HEK293T (cell line): ENCODE measurements at regions of chr6 and their contacts with region 1.

Region 1: GRCh38 chr6:89829591-89830385 is at the start of gene CASP8AP2:
- DNase-seq: peak; percentile 94

Region 2: DNA sequence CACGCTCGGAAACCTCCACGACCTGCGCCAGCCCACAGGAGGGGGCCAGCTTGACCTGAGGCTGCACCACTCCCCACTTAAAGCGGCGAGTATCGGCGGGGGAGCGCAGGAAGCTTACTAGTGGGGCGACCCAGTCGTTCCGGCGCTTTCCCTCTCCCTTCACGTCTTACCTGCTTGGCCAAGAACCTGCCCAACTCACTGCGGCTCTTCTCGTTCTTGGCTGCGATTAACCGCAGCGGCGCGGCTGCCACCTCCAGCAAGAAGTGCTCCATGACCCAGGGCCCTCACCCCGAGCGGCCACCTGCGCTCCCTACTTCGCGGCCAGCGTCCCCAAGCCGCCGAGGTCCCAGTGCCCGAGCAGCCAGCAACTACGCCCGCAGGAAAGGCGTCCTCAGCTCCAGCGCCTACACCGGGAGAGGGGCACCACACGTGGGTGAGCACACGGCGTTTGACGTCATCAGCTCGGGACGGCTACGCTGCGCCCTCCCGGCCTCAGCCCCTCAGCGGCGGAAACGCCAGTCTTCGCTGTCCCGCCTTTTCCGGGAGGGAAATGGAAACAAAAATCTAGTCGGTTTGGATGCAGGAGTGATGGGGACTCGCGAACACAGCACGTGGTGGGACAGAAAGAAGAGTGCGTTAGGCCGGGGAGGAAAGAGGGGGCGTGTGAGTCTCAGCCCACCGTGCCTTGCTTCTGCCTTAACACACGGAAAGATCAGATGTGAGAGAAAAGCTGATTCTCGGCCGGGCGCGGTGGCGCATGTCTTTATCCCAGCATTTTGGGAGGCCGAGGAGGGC is 10.3 kb before region 1 on chr6 and contains the start of gene MDN1:
- CTCF ChIA-PET with region 1: no interaction called
- POLR2A ChIA-PET with region 1: interaction called, 92 read pairs
- DNase-seq: peak; percentile 93

Region 3: DNA sequence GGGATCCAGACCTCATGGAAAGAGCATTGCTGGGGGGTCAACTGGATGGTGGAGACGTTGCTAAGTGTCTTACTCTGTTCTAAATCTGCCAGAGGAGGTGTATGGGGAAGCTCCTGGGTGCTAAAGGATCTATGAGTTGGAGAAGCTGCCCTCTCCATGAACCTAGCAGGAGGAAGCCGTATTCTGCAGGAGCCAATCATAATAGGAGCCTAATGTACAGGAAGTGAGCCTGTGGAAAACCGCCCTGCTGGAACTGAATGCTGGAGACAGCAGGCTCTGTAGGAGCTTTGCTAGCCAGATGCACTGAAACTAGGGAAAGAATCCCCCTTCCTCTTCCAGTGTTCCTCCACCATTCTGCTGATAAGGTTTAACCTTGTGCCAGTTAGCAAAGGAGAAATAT is 10.8 kb after region 1 on chr6:
- CTCF ChIA-PET with region 1: no interaction called
- POLR2A ChIA-PET with region 1: interaction called, 14 read pairs
- DNase-seq: peak; percentile 21